ENCODE measurements at regions of chr13 and their contacts with region 1.

Region 1: DNA sequence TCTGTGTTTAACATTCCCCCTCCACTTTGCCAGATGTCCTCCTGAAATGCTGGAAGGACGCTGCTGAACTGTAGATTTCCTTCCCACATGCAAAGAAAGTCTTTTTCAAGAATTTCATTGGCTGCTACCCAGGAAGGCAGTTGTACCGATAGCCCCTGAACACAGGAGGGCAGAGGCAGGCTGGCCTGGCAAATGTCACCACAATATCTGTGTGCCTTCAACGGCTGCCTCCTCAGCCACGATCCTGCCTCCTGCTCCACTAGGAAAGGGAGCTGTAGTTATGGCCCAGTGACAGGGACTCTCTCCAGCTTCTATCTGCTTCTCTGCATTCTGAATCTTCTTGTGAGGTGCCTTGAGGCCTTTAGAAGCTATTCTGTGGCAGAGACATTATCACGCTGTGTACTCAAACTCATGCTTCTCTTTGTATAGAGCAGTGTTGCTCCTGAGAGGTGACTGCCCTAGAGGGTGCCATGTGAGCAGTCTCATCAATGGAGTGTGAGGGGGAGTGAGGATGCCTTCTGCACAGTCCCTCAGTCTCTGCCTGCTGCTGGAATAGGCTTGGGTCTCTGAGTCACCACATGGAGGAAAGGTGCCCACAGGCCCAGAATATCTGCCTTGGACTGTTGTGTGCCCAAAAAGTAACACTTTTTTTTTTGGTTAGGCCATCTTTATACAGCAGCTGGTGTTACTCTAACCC is 279.8 kb downstream of the DNAJC15 start:
- DNase-seq: peak; percentile 80
- H3K4me3 ChIP-seq: no peak overlapping the region
- H3K27ac ChIP-seq: peak overlapping the region; percentile 33 to 75 (median 71)
- H3K4me1 ChIP-seq: peaks cover 0 to 99% (median 76%) of the 10 kb centered on the region in 4 donors
- H3K27me3 ChIP-seq: no peaks in the 10 kb centered on the region
- CTCF ChIP-seq: peak; percentile 33 to 50 (median 42)
- EP300 ChIP-seq: no peak
- POLR2A ChIP-seq: no peak

Region 2: GRCh38 chr13:43484432-43485225 is 181.4 kb after region 1 on chr13:
- intact Hi-C with region 1: loop called (anchors 10 kb)
- DNase-seq: no peak
- H3K4me3 ChIP-seq: no peak overlapping the region
- H3K27ac ChIP-seq: peak overlapping the region in 3 of 4 donors; percentile 6 to 70 (median 17)
- H3K4me1 ChIP-seq: peaks cover 0 to 49% (median 30%) of the 10 kb centered on the region in 4 donors
- H3K27me3 ChIP-seq: no peaks in the 10 kb centered on the region
- CTCF ChIP-seq: no peak
- EP300 ChIP-seq: no peak
- POLR2A ChIP-seq: no peak

Measured in sigmoid colon (tissue), 7 donors.